ENCODE measurements at regions of chr4 and their contacts with region 1.

Region 1: DNA sequence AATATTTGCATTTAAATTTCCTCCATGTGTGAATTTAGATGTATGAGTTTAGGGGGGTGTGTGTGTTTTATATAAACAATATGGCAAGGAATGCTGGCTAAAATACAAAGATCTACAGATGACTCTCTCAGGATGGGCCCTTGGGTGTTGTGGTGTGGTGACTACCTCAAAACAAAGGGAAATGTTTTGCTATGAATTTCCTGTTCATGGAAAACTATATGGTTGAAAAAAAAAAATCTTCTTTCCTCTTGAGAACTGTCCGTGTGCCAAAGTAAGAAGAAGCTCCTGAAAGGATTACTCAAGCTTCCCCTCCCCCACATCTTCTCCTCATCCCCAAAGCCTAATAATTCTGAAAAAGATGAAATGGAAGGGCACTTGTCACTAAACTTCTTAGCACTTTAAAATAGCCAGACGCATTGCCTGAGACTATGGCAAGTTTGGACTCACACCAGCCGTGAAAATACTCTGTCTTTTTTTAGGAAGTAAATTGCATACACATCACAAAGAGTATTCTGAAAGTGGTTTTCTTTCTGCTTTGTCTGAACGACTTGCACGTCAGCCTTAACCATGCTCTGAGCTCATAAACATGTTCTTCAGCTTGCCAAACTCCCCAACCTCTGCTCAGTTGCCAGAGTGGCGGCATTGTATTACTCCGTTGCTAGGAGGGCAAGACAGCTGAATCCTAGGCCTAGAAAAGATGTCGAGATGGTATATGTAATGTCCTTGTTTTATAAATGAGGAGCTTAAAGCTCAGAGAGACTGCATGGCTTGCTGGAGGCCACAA is 250.4 kb upstream of the JADE1 start:
- DNase-seq: no peak
- H3K4me3 ChIP-seq: no peak overlapping the region
- H3K27ac ChIP-seq: peak overlapping the region; percentile 66 to 72
- H3K4me1 ChIP-seq: peaks cover 0 to 2% of the 10 kb centered on the region in 2 donors
- H3K27me3 ChIP-seq: no peaks in the 10 kb centered on the region
- CTCF ChIP-seq: no peak

Region 2: GRCh38 chr4:128483816-128484215 is 75.3 kb before region 1 on chr4:
- intact Hi-C with region 1: no loop called
- DNase-seq: no peak
- H3K4me3 ChIP-seq: no peak overlapping the region
- H3K27ac ChIP-seq: no peak overlapping the region
- H3K4me1 ChIP-seq: peaks cover 0 to 3% of the 10 kb centered on the region in 2 donors
- H3K27me3 ChIP-seq: no peaks in the 10 kb centered on the region
- CTCF ChIP-seq: no peak

Region 3: GRCh38 chr4:129093191-129093920 is 534.3 kb after region 1 on chr4 and contains the start of gene SCLT1:
- intact Hi-C with region 1: loop called (anchors 10 kb)
- DNase-seq: peak; percentile 92 to 99
- H3K4me3 ChIP-seq: peak within 1 kb of the TSS; percentile 74 to 75
- H3K27ac ChIP-seq: peak within 1 kb of the TSS; percentile 91 to 92
- H3K4me1 ChIP-seq: peaks cover 0 to 14% of the 10 kb centered on the region in 2 donors
- H3K27me3 ChIP-seq: no peaks in the 10 kb centered on the region
- CTCF ChIP-seq: no peak
- total RNA-seq, gene SCLT1: 7.0 TPM

Measured in ascending aorta (tissue), 2 donors.